Mammary epithelial cell (primary cell): ENCODE measurements at regions of chrX and their contacts with region 1.

Region 1: GRCh38 chrX:15686818-15687685 is 22.4 kb upstream of the CLTRN start:
- DNase-seq: peak; percentile 49
- H3K4me3 ChIP-seq: no peak overlapping the region
- H3K27ac ChIP-seq: no peak overlapping the region
- H3K4me1 ChIP-seq: no peaks in the 10 kb centered on the region
- H3K27me3 ChIP-seq: no peaks in the 10 kb centered on the region
- CTCF ChIP-seq: peak; percentile 87 to 89

Region 2: DNA sequence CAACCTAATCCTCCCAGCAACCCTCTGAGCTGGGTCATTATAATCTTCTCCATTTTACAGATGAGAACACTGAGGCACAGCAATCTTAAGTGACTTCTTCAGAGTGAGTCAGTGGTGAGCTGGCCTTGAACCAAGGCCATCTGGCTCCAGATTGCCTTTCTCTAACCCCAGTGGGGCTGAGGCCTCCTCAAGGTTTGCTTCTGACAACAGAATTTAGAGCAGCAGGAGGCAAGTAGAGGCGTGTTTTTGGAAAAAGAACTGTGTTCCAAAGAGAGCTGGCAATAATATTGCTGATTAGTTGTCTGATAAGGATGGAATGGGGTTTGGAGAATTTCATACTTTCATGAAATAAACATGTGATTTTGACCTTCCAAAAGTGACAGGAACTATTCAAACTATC is 235.1 kb before region 1 on chrX:
- CTCF ChIA-PET with region 1: no interaction called
- dilution Hi-C with region 1: no loop called
- in situ Hi-C with region 1: no loop called
- intact Hi-C with region 1: no loop called
- DNase-seq: peak; percentile 65
- H3K4me3 ChIP-seq: no peak overlapping the region
- H3K27ac ChIP-seq: no peak overlapping the region
- H3K4me1 ChIP-seq: peaks cover 25% of the 10 kb centered on the region
- H3K27me3 ChIP-seq: no peaks in the 10 kb centered on the region
- CTCF ChIP-seq: no peak

Region 3: DNA sequence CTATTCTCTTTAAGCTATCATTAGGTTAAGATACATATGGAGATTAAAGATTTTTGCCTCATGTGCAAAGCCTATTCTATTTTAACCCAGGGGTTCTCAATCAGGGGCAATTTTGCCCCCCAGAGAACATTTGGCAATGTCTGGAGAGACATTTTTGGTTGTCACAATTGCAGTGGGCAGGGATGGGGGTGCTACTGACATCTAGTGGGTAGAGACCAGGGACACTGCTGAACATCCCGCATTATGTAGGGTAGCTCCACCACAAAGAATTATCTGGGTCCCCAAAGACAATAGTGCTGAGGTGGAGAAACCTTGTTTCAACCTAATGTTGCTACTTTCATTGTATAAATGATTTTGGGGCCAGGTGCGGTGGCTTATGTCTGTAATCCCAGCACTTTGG is 37.9 kb after region 1 on chrX:
- CTCF ChIA-PET with region 1: no interaction called
- dilution Hi-C with region 1: no loop called
- in situ Hi-C with region 1: no loop called
- intact Hi-C with region 1: no loop called
- DNase-seq: no peak
- H3K4me3 ChIP-seq: no peak overlapping the region
- H3K27ac ChIP-seq: no peak overlapping the region
- H3K4me1 ChIP-seq: no peaks in the 10 kb centered on the region
- H3K27me3 ChIP-seq: no peaks in the 10 kb centered on the region
- CTCF ChIP-seq: no peak

Region 4: GRCh38 chrX:15749642-15750610 is 62.9 kb after region 1 on chrX:
- CTCF ChIA-PET with region 1: no interaction called
- dilution Hi-C with region 1: no loop called
- in situ Hi-C with region 1: no loop called
- intact Hi-C with region 1: no loop called
- DNase-seq: no peak
- H3K4me3 ChIP-seq: no peak overlapping the region
- H3K27ac ChIP-seq: no peak overlapping the region
- H3K4me1 ChIP-seq: no peaks in the 10 kb centered on the region
- H3K27me3 ChIP-seq: no peaks in the 10 kb centered on the region
- CTCF ChIP-seq: no peak

Region 5: GRCh38 chrX:15789979-15790768 is 103.1 kb after region 1 on chrX and contains the start of gene ZRSR2:
- CTCF ChIA-PET with region 1: no interaction called
- dilution Hi-C with region 1: no loop called
- in situ Hi-C with region 1: no loop called
- intact Hi-C with region 1: loop called (anchors 2 kb)
- DNase-seq: peak; percentile 90
- H3K4me3 ChIP-seq: peak within 1 kb of the TSS; percentile 66 to 85 (median 72)
- H3K27ac ChIP-seq: peak within 1 kb of the TSS; percentile 48
- H3K4me1 ChIP-seq: peaks cover 11% of the 10 kb centered on the region
- H3K27me3 ChIP-seq: no peaks in the 10 kb centered on the region
- CTCF ChIP-seq: peak in 1 of 2 donors; percentile 7
- total RNA-seq, gene ZRSR2: 2.5 to 20.3 TPM

Region 6: DNA sequence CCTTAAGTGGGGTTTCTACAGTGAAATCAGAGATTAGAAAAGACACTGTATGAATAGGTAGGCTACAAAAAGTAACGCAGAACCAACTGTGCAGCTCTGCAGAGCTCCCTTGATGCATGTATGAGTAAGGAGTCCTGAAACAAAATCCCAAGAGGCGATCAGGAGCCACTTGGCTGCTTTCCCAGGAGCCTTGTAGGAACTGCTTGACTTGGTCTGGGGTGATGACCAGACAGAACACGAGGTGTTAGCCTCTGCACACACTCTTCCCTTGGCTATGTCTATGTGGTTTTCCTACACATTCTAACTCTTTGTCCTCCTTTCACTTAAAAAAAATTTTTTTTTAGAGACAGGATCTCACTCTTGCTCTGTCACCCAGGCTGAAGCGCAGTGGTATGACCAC is 190.3 kb after region 1 on chrX:
- CTCF ChIA-PET with region 1: no interaction called
- dilution Hi-C with region 1: no loop called
- in situ Hi-C with region 1: no loop called
- intact Hi-C with region 1: no loop called
- DNase-seq: peak; percentile 43
- H3K4me3 ChIP-seq: no peak overlapping the region
- H3K27ac ChIP-seq: no peak overlapping the region
- H3K4me1 ChIP-seq: no peaks in the 10 kb centered on the region
- H3K27me3 ChIP-seq: no peaks in the 10 kb centered on the region
- CTCF ChIP-seq: no peak

Region 7: DNA sequence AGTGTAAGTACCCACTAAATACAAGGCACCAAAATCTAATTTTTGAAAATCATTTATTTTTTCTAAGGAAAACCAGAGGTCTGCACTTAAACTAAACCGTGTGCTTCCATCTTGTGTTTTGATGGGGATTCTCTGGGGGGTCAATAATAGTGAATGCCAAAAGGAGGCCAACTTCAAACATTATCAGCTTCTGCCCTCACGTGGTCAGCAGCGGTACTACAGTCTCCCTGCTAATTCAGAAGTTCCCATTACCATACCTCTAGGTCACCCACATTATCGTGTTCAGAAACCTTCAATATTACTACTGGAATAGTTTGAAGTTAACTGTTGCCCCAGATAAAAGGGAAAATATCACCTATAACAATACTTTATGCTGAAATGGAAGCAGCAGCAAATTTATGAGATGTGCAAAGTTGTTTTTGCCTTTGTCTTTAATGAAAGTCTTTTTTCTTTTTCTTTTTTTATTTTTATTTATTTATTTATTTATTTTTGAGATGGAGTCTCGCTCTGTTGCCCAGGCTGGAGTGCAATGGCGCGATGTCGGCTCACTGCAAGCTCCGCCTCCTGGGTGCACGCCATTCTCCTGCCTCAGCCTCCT is 1008.1 kb after region 1 on chrX:
- CTCF ChIA-PET with region 1: no interaction called
- dilution Hi-C with region 1: no loop called
- in situ Hi-C with region 1: no loop called
- intact Hi-C with region 1: loop called (anchors 10 kb)
- DNase-seq: peak; percentile 32
- H3K4me3 ChIP-seq: no peak overlapping the region
- H3K27ac ChIP-seq: no peak overlapping the region
- H3K4me1 ChIP-seq: no peaks in the 10 kb centered on the region
- H3K27me3 ChIP-seq: no peaks in the 10 kb centered on the region
- CTCF ChIP-seq: peak; percentile 93 to 97